ENCODE measurements at regions of chr16 and their contacts with region 1.

Region 1: DNA sequence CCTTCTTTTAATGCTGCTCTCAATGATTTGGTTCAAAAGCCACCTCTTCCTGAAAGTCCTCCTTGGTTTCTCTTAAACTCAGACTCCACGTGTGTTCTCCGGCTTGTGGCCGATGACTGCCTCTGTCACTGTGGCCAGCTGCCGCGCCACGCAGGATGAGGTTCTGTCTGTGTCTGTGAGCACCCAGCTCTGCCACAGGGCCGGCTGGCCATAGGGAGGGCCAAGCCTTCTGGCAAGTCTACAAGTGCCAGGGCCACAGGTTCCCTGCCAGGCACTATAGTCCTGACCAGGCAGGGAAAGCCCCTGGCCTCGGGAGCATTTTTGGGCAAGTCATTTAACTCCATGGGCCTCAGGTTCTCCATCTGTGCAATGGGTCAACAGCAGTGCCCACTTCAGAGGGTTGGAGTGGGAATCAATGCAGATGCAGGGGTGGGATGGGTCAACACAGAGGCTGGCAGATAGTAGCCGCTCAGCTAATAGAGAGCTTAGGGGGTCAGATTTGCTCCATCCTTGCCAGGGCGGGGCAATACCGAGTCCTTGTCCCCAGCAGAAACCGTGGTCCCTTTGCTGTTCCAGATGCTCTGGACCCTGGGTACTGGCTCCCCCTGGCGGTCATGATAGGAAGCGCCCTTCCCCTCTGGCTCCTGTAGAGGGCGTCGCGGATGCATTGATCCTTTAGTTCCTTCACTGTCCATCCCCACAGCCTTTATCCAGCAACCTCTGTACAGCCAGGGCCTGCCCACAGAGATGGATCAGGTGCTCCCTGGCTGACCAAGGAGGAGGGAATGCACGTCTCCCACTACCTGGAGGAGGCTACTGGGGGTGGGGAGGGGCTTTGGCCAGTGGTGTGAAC is 19.3 kb upstream of the ADGRG3 start:
- H3K4me3 ChIP-seq: no peak overlapping the region
- H3K27ac ChIP-seq: no peak overlapping the region
- H3K4me1 ChIP-seq: no peaks in the 10 kb centered on the region
- CTCF ChIP-seq: peak; percentile 98

Region 2: GRCh38 chr16:57576429-57576870 is 72.4 kb before region 1 on chr16:
- CTCF ChIA-PET with region 1: interaction called, 87 read pairs
- POLR2A ChIA-PET with region 1: no interaction called
- H3K4me3 ChIP-seq: no peak overlapping the region
- H3K27ac ChIP-seq: no peak overlapping the region
- H3K4me1 ChIP-seq: no peaks in the 10 kb centered on the region
- CTCF ChIP-seq: peak; percentile 93

Region 3: DNA sequence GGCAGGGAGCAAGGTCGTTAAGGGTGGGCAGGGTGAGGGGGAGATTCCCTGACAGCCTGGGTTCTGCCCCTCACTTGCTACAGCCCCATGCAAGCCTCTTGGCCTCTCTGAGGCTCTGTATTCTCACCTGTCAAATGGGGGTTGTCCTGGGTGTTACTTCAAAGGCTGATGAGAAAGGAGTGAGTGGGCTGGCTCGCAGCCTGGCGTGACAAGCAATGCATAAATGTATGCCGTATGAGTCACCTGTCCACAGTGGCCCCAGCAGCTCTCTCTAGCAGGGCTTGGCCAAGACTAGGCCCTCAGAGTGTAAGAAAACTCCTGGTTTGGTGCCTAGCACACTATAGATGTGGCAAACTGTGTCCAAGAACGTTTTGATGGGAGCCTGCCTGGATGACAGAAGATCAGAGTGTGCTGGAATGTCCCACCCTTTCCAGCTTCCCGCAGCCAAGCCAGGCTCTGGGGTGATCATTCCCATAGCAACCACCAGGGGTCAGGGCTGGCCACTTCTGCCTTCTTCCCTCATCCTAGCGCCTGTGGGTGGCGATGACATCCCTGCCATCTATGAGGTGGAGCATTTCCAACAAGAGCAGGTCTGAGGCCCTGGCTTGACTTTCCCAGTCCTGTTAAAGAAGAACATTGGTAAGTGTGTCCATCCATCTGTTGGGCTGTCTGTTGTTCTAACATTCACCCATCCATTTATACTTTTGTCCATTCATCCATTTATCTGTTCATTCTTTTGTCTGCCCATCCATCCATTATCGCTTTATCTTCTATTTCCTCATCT is 57.5 kb before region 1 on chr16:
- CTCF ChIA-PET with region 1: interaction called, 59 read pairs
- POLR2A ChIA-PET with region 1: no interaction called
- H3K4me3 ChIP-seq: no peak overlapping the region
- H3K27ac ChIP-seq: no peak overlapping the region
- H3K4me1 ChIP-seq: no peaks in the 10 kb centered on the region
- CTCF ChIP-seq: peak; percentile 92

Region 4: GRCh38 chr16:57600048-57600835 is 48.6 kb before region 1 on chr16:
- CTCF ChIA-PET with region 1: interaction called, 59 read pairs
- POLR2A ChIA-PET with region 1: no interaction called
- H3K4me3 ChIP-seq: no peak overlapping the region
- H3K27ac ChIP-seq: no peak overlapping the region
- H3K4me1 ChIP-seq: no peaks in the 10 kb centered on the region
- CTCF ChIP-seq: peak; percentile 57

Region 5: GRCh38 chr16:57609541-57610401 is 39.0 kb before region 1 on chr16:
- CTCF ChIA-PET with region 1: interaction called, 20 read pairs
- POLR2A ChIA-PET with region 1: interaction called, 3 read pairs
- H3K4me3 ChIP-seq: no peak overlapping the region
- H3K27ac ChIP-seq: no peak overlapping the region
- H3K4me1 ChIP-seq: no peaks in the 10 kb centered on the region
- CTCF ChIP-seq: no peak

Region 6: GRCh38 chr16:57628008-57628781 is 20.6 kb before region 1 on chr16 and contains the start of gene ADGRG1:
- CTCF ChIA-PET with region 1: interaction called, 60 read pairs
- POLR2A ChIA-PET with region 1: no interaction called
- H3K4me3 ChIP-seq: no peak within 1 kb of the TSS
- H3K27ac ChIP-seq: no peak within 1 kb of the TSS
- H3K4me1 ChIP-seq: no peaks in the 10 kb centered on the region
- CTCF ChIP-seq: peak; percentile 43; the same call in 1 of the 2 replicates

Measured in HEK293 (cell line).